ENCODE measurements at regions of chr17 and their contacts with region 1.

Region 1: GRCh38 chr17:44210342-44211192 is 8.9 kb downstream of the UBTF start:
- DNase-seq: peak; percentile 84 to 91
- ATAC-seq: peak; percentile 77 to 92
- H3K4me3 ChIP-seq: no peak overlapping the region
- H3K27ac ChIP-seq: peak overlapping the region in 1 of 2 experiments; percentile 65; a peak in 2 of 6 replicates
- H3K4me1 ChIP-seq: peaks cover 27% of the 10 kb centered on the region
- CTCF ChIP-seq: peak; percentile 99
- EP300 ChIP-seq: no peak
- POLR2A ChIP-seq: no peak
- RAD21 ChIP-seq: peak; percentile 84 to 96

Region 2: DNA sequence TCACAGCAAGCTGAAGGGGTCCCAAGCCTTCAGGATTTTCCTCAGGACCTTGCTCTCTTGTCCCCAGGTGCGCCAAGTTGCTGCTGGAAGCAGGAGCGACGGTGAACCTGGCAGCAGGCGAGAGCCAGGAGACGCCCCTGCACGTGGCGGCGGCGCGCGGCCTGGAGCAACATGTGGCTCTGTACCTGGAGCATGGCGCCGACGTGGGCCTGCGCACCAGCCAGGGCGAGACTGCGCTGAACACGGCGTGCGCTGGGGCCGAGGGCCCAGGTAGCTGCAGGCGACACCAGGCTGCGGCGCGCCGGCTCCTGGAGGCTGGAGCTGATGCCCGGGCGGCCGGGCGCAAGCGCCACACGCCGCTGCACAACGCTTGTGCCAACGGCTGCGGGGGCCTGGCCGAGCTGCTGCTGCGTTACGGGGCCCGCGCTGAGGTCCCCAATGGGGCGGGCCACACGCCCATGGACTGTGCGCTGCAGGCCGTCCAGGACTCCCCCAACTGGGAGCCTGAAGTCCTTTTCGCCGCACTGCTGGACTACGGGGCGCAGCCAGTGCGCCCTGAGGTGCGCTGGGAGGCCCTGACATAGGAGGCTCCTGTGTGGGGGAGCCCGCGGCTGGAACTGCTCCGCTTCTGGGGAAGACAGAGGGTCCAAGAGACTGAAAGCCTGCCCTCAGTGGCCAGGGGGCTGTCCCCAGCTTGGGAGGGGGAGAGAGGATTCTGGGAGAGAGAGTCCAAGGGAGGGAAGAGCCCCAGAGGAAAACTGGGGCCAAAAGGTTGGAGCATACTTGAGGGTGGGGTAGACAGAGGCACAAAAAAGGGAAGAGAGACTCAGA is 33.7 kb before region 1 on chr17:
- CTCF ChIA-PET with region 1: interaction called, 15 read pairs
- POLR2A ChIA-PET with region 1: no interaction called
- DNase-seq: no peak
- ATAC-seq: peak; percentile 16 to 19; a peak in 3 of 6 replicates
- H3K4me3 ChIP-seq: no peak overlapping the region
- H3K27ac ChIP-seq: no peak overlapping the region
- H3K4me1 ChIP-seq: no peaks in the 10 kb centered on the region
- CTCF ChIP-seq: no peak
- EP300 ChIP-seq: no peak
- POLR2A ChIP-seq: no peak
- RAD21 ChIP-seq: no peak

Region 3: GRCh38 chr17:44230140-44230539 is 19.6 kb after region 1 on chr17:
- CTCF ChIA-PET with region 1: interaction called, 135 read pairs
- POLR2A ChIA-PET with region 1: no interaction called
- DNase-seq: no peak
- ATAC-seq: peak; percentile 33 to 43; a peak in 4 of 6 replicates
- H3K4me3 ChIP-seq: no peak overlapping the region
- H3K27ac ChIP-seq: no peak overlapping the region
- H3K4me1 ChIP-seq: peaks cover 4% of the 10 kb centered on the region; the same call in 2 of the 3 replicates
- CTCF ChIP-seq: no peak
- EP300 ChIP-seq: no peak
- POLR2A ChIP-seq: no peak
- RAD21 ChIP-seq: no peak

Region 4: DNA sequence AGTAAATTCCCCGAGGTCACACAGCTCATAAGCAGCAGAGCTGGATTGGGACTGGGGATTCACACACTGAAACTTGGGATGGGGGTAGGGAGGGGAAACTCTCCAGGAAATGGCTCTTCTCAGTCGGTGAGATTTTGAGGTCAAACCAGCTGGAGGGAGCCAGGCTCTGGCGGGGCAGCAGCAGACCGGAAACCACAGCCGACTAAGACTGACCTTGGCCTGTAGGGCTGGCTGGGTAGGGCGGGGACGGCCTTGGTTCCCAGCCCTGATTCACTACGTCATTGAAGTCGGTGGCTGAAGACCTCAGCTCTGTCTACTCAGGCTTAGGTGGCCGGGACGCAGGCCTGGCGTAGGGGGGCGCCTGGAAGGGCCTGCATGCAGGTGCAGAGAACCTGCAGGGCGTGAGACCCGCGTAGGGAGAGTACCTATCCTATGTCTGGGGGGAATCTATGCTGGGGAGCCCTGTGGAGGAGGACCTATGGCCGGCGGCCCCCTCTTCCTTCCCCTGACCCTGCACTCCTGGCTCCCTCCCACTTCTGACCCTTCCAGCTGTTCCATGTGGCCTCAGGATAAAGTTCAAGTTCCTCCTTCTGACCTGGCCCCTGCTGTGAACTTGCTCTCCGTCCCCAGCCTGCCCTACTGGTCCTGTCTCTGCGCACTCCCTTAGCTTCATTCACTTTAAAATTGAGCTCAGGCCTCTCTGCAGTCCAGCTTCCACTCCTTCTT is 69.3 kb after region 1 on chr17:
- CTCF ChIA-PET with region 1: interaction called, 10 read pairs
- POLR2A ChIA-PET with region 1: no interaction called
- DNase-seq: peak in 1 of 2 experiments; percentile 51
- ATAC-seq: peak; percentile 42 to 67; a peak in 4 of 6 replicates
- H3K4me3 ChIP-seq: no peak overlapping the region
- H3K27ac ChIP-seq: no peak overlapping the region
- H3K4me1 ChIP-seq: peaks cover 6% of the 10 kb centered on the region; the same call in 1 of the 3 replicates
- CTCF ChIP-seq: no peak
- EP300 ChIP-seq: no peak
- POLR2A ChIP-seq: no peak
- RAD21 ChIP-seq: no peak

Region 5: GRCh38 chr17:44324571-44325275 is 114.2 kb after region 1 on chr17 and contains the start of gene SLC25A39:
- CTCF ChIA-PET with region 1: interaction called, 246 read pairs
- POLR2A ChIA-PET with region 1: interaction called, 4 read pairs
- DNase-seq: peak; percentile 76 to 97
- ATAC-seq: peak; percentile 63 to 79
- H3K4me3 ChIP-seq: peak within 1 kb of the TSS; percentile 98
- H3K27ac ChIP-seq: peak within 1 kb of the TSS; percentile 93
- H3K4me1 ChIP-seq: peaks cover 17% of the 10 kb centered on the region
- CTCF ChIP-seq: no peak
- EP300 ChIP-seq: no peak
- POLR2A ChIP-seq: peak; percentile 67
- RAD21 ChIP-seq: no peak; a peak in 2 of 5 replicates
- polyA plus RNA-seq, gene SLC25A39: 80.9 and 90.1 TPM in 2 replicates

Region 6: GRCh38 chr17:44350733-44351226 is 140.2 kb after region 1 on chr17:
- CTCF ChIA-PET with region 1: interaction called, 107 read pairs
- POLR2A ChIA-PET with region 1: no interaction called
- DNase-seq: peak; percentile 73 to 96
- ATAC-seq: peak; percentile 78 to 92
- H3K4me3 ChIP-seq: no peak overlapping the region
- H3K27ac ChIP-seq: no peak overlapping the region
- H3K4me1 ChIP-seq: peaks cover 6% of the 10 kb centered on the region
- CTCF ChIP-seq: peak; percentile 81
- EP300 ChIP-seq: no peak
- POLR2A ChIP-seq: no peak
- RAD21 ChIP-seq: peak; percentile 75 to 85